Activated CD4-positive, alpha-beta T cell treated with anti-CD3 and anti-CD28 coated beads, Interleukin-2, amount 10 ng/mL, durations not matched to agents 24 days and 14 days (primary cell): ENCODE measurements at regions of chr1 and their contacts with region 1.

Region 1: GRCh38 chr1:153922972-153923925 is at the start of gene GATAD2B:
- DNase-seq: peak; percentile 100
- H3K4me3 Mint-ChIP-seq: peak within 1 kb of the TSS; percentile 86
- H3K27ac Mint-ChIP-seq: peak within 1 kb of the TSS; percentile 98
- H3K4me1 Mint-ChIP-seq: peaks cover 36% of the 10 kb centered on the region
- H3K27me3 Mint-ChIP-seq: peaks cover 2% of the 10 kb centered on the region
- total RNA-seq, gene GATAD2B: 68.8 and 69.0 TPM in 2 replicates

Region 2: DNA sequence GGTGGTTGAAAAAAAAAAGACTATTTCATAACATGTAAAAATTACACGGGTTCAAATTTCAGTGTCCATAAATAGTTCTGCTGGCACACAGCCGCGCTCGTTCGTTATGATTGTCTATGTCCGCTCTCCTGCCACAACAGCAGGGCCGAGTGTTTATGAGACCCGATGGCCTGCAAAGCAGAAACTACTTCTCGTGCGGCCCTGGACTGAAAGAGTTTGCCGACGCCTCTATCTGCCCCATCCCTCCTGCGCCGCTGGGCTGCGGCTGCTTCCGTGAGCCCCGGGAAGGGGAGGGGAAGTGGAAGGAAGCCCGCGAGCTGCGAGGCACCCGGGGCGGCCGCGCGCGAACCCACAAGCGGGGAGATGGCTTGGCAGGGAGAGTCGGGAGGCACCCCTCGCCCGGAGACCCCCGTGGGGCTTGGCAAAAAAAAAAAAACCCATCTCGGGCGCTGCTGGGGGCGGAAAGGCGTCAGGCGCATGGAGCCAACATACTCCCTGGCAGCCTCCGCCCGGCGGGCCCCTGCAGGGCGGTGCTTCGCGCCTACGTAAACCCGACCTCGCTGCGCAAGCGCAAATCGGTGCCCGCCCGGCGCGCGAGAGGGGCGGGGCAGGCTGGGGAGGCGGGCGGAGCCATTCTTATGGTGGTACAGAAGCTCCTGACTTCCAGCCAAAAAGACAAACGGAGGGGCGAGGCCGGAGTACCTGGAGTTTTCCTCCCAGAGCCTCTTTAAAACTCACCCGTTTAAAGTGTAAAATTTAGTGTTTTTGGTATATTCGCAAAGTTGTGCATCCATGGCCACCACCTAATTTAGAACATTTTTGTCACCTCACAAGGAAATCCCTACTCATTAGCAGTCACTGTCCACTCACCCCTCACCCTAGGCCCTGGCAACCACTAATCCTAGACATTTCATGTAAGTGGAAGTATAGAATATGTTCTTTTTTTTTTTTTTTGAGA is 139.7 kb before region 1 on chr1:
- intact Hi-C with region 1: loop called (anchors 1 kb)
- DNase-seq: peak; percentile 98
- H3K4me3 Mint-ChIP-seq: peak overlapping the region; percentile 96
- H3K27ac Mint-ChIP-seq: peak overlapping the region; percentile 97
- H3K4me1 Mint-ChIP-seq: peaks cover 7% of the 10 kb centered on the region
- H3K27me3 Mint-ChIP-seq: peaks cover 12% of the 10 kb centered on the region

Region 3: DNA sequence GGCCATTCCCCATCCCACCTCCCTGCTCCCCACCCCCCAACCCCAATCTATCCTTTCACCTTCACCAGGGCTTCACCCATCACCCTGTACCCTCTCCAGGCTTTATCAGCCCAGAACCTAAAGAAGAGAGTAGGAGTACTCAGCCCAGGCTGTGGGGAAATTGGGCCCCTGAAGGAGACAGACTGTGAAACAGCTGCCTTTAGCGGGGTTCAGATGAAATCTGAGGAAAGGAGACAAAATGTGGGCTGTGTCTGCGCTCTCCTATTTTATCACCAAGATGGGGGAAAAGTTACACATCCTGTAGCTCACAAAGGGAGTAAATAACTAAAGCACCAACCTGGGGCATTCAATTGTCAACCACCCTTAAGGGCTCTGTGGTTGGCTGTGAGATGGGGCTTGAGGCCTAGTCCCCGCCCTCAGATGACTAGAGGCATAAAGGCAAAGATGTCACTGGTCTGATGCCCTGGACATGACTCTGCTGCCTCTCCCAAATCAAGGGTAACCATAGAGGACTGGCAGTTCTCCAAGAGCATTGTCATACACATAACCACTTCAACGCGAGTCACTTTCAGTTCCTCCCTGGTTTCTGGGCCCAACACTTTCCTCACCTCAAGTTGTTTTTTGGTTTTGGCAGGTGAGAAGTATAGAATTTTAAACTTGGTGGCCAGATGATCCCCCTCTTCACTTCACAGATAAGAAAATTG is 118.1 kb before region 1 on chr1:
- intact Hi-C with region 1: loop called (anchors 2 kb)
- DNase-seq: peak; percentile 87
- H3K4me3 Mint-ChIP-seq: peak overlapping the region; percentile 11
- H3K27ac Mint-ChIP-seq: peak overlapping the region; percentile 75
- H3K4me1 Mint-ChIP-seq: peaks cover 25% of the 10 kb centered on the region
- H3K27me3 Mint-ChIP-seq: no peaks in the 10 kb centered on the region

Region 4: GRCh38 chr1:153888533-153888932 is 34.7 kb before region 1 on chr1:
- intact Hi-C with region 1: loop called (anchors 5 kb)
- DNase-seq: no peak
- H3K4me3 Mint-ChIP-seq: peak overlapping the region; percentile 24
- H3K27ac Mint-ChIP-seq: peak overlapping the region; percentile 45
- H3K4me1 Mint-ChIP-seq: peaks cover 21% of the 10 kb centered on the region
- H3K27me3 Mint-ChIP-seq: no peaks in the 10 kb centered on the region

Region 5: GRCh38 chr1:153958111-153958960 is 35.1 kb after region 1 on chr1 and contains the start of gene CRTC2:
- intact Hi-C with region 1: loop called (anchors 1 kb)
- DNase-seq: peak; percentile 99
- H3K4me3 Mint-ChIP-seq: peak within 1 kb of the TSS; percentile 88
- H3K27ac Mint-ChIP-seq: peak within 1 kb of the TSS; percentile 94
- H3K4me1 Mint-ChIP-seq: peaks cover 52% of the 10 kb centered on the region
- H3K27me3 Mint-ChIP-seq: no peaks in the 10 kb centered on the region
- total RNA-seq, gene CRTC2: 72.4 and 76.8 TPM in 2 replicates